ENCODE measurements at regions of chr5 and their contacts with region 1.

Region 1: DNA sequence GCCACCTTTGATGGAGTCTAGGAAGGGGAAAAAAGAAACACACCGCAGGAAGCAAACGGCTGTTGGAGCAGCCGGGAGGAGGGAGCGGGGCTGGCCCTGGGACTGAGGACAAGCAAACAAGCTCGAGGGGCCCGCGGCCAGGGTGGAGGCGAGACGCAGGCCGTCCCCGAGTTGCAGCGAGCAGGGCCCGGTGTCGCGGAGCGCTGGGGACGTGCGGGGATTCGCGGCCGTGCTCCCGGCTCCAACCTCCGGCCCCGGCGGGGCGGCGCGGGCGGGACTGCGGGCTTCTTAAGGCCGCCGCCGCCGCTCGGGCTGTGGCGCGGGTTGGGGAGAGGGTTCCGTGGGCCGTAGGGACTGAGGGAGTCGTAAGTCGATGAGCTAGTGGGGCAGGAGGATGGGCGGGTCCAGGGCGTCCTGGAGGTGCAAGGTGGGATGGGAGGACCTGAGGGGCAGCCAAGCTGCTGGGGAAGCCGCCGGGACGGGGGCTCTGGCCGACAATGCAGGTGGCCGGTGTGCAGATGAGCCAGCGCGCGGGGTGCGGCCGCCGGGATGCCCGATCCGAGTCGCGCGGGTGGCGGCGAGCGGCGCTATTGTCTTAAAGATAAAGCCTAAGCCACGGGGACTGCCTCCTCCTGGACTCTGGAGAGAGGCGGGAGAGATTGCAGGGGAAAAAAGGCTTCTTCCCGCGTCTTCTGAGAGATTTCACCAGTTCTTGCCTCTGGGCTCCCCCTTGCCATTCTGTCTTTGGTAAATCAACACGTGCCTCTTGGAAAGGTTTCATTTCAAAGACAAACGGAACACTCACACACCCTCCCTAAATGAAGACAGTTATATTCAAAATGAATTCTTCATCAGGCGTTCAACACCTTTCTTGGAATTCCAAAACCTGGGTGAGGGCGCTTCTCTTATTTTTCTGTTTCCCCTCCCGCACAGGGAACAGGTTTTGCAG is 1.6 kb upstream of the HAPLN1 start:
- DNase-seq: peak in 1 of 2 experiments; percentile 78
- H3K4me3 ChIP-seq: peak overlapping the region; percentile 67
- H3K27ac ChIP-seq: no peak overlapping the region
- H3K4me1 ChIP-seq: 0 out of 2 replicates have a peak, but pooled peaks cover 4% of the 10 kb centered on the region
- H3K27me3 ChIP-seq: no peaks in the 10 kb centered on the region; the same call in 1 of the 2 replicates
- CTCF ChIP-seq: peak; percentile 42

Region 2: GRCh38 chr5:84059672-84060071 is 337.4 kb after region 1 on chr5:
- CTCF ChIA-PET with region 1: no interaction called
- POLR2A ChIA-PET with region 1: no interaction called
- intact Hi-C with region 1: loop called (anchors 10 kb)
- DNase-seq: peak in 1 of 2 experiments; percentile 43
- H3K4me3 ChIP-seq: no peak overlapping the region
- H3K27ac ChIP-seq: no peak overlapping the region
- H3K4me1 ChIP-seq: no peaks in the 10 kb centered on the region
- H3K27me3 ChIP-seq: no peaks in the 10 kb centered on the region
- CTCF ChIP-seq: no peak

Region 3: GRCh38 chr5:85049020-85049419 is 1326.8 kb after region 1 on chr5:
- CTCF ChIA-PET with region 1: no interaction called
- POLR2A ChIA-PET with region 1: no interaction called
- intact Hi-C with region 1: loop called (anchors 10 kb)
- DNase-seq: peak in 1 of 2 experiments; percentile 1
- H3K4me3 ChIP-seq: no peak overlapping the region
- H3K27ac ChIP-seq: no peak overlapping the region
- H3K4me1 ChIP-seq: no peaks in the 10 kb centered on the region
- H3K27me3 ChIP-seq: no peaks in the 10 kb centered on the region
- CTCF ChIP-seq: peak; percentile 46; the same call in 1 of the 2 replicates